Common myeloid progenitor, CD34-positive (primary cell): ENCODE measurements at regions of chr7 and their contacts with region 1.

Region 1: DNA sequence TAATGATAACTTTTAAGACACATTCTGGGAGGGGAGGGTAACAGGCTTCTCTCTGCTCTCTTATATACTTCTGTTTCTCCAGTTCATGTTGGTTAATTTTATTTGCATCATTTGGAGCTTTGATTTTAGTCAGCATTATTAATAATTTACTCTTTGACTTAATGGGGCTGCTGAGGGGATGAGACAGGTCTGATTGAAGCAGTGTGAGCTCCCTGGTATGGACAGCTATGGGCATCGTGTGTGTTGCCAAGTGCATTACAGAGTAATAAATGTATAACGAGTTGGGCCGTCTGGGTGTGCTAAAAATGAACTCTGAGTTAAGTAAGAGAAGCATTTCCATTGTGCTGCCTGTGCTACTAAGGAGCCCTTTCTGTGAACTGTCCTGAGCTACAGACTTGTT is 31.7 kb upstream of the IKZF1 start:
- DNase-seq: no peak
- H3K4me3 ChIP-seq: no peak overlapping the region
- H3K27ac ChIP-seq: no peak overlapping the region
- H3K4me1 ChIP-seq: peaks cover 14 to 46% (median 31%) of the 10 kb centered on the region in 4 experiments
- H3K27me3 ChIP-seq: no peaks in the 10 kb centered on the region

Region 2: DNA sequence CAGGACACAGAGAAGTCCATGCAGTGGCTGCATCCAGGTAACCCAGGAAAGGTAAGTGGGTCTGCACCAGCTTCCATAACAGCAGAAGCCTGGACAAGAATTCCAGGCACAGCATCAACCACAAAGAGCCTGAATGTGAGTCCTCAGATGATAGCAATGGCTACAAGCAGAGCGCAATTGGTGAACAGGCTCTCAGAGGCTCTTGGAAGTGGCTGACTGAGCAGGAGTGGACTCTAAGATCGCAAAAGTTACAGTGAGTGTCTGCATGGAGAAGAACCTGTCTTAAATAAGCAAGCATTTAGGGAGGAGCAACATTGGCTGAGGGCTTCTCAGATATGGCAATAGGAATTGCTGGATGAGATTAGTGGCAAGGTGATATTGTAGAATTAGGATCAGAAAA is 541.0 kb before region 1 on chr7:
- CTCF ChIA-PET with region 1: no interaction called
- POLR2A ChIA-PET with region 1: no interaction called
- DNase-seq: no peak
- H3K4me3 ChIP-seq: no peak overlapping the region
- H3K27ac ChIP-seq: no peak overlapping the region
- H3K4me1 ChIP-seq: no peaks in the 10 kb centered on the region
- H3K27me3 ChIP-seq: no peaks in the 10 kb centered on the region

Region 3: GRCh38 chr7:50282813-50283605 is 10.2 kb after region 1 on chr7:
- CTCF ChIA-PET with region 1: interaction called, 12 read pairs
- POLR2A ChIA-PET with region 1: interaction called, 3 read pairs
- DNase-seq: no peak
- H3K4me3 ChIP-seq: no peak overlapping the region
- H3K27ac ChIP-seq: no peak overlapping the region
- H3K4me1 ChIP-seq: peaks cover 16 to 57% (median 46%) of the 10 kb centered on the region in 4 experiments
- H3K27me3 ChIP-seq: no peaks in the 10 kb centered on the region